Tibial artery (tissue), 4 donors: ENCODE measurements at regions of chr1 and their contacts with region 1.

Region 1: DNA sequence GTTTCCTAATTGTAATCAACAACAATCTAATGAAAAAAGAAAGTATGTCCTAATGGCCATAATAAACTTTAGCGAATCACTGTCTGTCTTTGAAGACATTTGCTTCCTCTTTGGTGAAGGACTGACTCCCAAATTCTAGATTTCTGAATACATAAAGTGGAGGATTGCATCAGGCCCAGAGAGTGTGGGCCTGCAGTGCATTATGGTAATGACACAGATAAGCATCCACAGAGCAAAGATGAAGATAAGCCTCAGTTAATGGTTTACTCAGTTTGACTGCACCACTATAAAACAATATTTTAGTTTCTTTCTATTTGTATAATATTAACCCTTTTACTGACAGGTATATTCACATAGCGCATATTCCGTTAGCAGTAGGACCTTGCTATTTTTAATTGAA is 365.5 kb downstream of the KCTD3 start:
- DNase-seq: no peak
- H3K4me3 ChIP-seq: no peak overlapping the region
- H3K27ac ChIP-seq: no peak overlapping the region
- H3K4me1 ChIP-seq: no peaks in the 10 kb centered on the region
- H3K27me3 ChIP-seq: no peaks in the 10 kb centered on the region
- CTCF ChIP-seq: no peak

Region 2: GRCh38 chr1:213934642-213935041 is 1997.9 kb before region 1 on chr1:
- intact Hi-C with region 1: loop called (anchors 5 kb)
- DNase-seq: no peak
- H3K4me3 ChIP-seq: no peak overlapping the region
- H3K27ac ChIP-seq: no peak overlapping the region
- H3K4me1 ChIP-seq: no peaks in the 10 kb centered on the region
- H3K27me3 ChIP-seq: peaks cover 0 to 4% of the 10 kb centered on the region in 2 donors
- CTCF ChIP-seq: no peak

Region 3: DNA sequence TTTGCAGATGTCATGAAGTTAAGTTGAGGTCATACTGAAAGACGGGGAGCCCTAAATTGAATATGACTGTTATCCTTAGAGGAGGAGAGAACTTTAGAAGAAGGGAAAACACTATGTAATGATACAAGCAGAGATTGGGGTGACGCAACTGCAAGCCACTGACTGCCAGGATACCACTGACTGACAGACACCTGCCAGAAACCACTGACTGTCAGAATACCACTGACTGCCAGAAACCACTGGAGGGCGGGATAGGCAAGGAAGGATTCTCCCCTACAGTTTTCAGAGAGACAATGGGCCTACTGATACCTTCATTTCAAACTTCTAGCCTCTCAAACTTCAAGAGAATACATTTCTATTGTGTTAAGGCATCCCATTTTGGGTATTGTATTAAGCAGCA is 101.9 kb after region 1 on chr1:
- intact Hi-C with region 1: no loop called
- DNase-seq: no peak
- H3K4me3 ChIP-seq: no peak overlapping the region
- H3K27ac ChIP-seq: no peak overlapping the region
- H3K4me1 ChIP-seq: no peaks in the 10 kb centered on the region
- H3K27me3 ChIP-seq: no peaks in the 10 kb centered on the region
- CTCF ChIP-seq: no peak